AG04450 (cell line): ENCODE measurements at regions of chr11 and their contacts with region 1.

Region 1: DNA sequence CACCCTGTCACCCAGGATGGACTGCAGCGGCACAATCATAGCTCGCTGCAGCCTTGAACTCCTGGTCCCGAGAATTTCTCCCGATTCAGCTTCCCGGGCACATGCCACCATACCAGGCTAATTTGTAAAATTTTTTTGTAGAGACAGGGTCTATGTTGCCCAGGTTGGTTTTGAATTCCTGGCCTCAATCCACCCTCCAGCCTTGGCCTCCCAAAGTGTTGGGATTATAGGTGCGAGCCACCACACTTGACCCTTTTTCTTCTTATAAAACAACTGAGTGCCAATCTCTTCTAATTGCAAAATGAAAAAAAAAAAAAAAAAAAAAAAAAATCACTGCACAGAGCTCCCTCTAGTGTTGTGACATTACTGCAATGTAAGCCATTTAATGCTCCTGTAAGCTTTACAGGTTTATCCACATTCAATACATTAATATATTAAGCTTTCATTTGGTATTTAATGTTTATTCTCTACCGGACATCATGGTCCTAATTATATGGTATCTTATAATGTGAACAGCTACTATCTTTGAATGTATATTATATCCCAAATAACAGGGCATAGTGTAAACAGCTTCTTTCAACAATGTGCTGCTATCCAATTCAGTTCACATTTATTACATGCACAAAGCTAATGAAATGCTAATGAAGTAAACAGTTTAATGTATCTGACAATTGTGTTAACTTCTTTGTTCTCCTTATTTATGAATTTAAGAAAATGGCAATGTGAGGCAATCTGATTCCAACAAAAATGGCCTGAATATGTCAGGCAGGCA is 44.6 kb downstream of the COPB1 start:
- DNase-seq: no peak
- H3K4me3 ChIP-seq: no peak overlapping the region
- H3K27ac ChIP-seq: no peak overlapping the region
- H3K27me3 ChIP-seq: no peaks in the 10 kb centered on the region
- CTCF ChIP-seq: peak; percentile 70

Region 2: GRCh38 chr11:14242187-14242586 is 212.9 kb before region 1 on chr11:
- CTCF ChIA-PET with region 1: interaction called, 10 read pairs
- POLR2A ChIA-PET with region 1: no interaction called
- DNase-seq: no peak
- H3K4me3 ChIP-seq: no peak overlapping the region
- H3K27ac ChIP-seq: no peak overlapping the region
- H3K27me3 ChIP-seq: peaks cover 27% of the 10 kb centered on the region
- CTCF ChIP-seq: no peak

Region 3: GRCh38 chr11:14269692-14270573 is 185.1 kb before region 1 on chr11:
- CTCF ChIA-PET with region 1: interaction called, 11 read pairs
- POLR2A ChIA-PET with region 1: no interaction called
- DNase-seq: no peak
- H3K4me3 ChIP-seq: no peak overlapping the region
- H3K27ac ChIP-seq: no peak overlapping the region
- H3K27me3 ChIP-seq: no peaks in the 10 kb centered on the region
- CTCF ChIP-seq: no peak

Region 4: GRCh38 chr11:14300661-14301304 is 154.3 kb before region 1 on chr11:
- CTCF ChIA-PET with region 1: interaction called, 273 read pairs
- POLR2A ChIA-PET with region 1: interaction called, 4 read pairs
- DNase-seq: no peak
- H3K4me3 ChIP-seq: no peak overlapping the region
- H3K27ac ChIP-seq: no peak overlapping the region
- H3K27me3 ChIP-seq: no peaks in the 10 kb centered on the region
- CTCF ChIP-seq: peak; percentile 87

Region 5: GRCh38 chr11:14350716-14351238 is 104.3 kb before region 1 on chr11:
- CTCF ChIA-PET with region 1: interaction called, 17 read pairs
- POLR2A ChIA-PET with region 1: no interaction called
- DNase-seq: no peak
- H3K4me3 ChIP-seq: no peak overlapping the region
- H3K27ac ChIP-seq: no peak overlapping the region
- H3K27me3 ChIP-seq: no peaks in the 10 kb centered on the region
- CTCF ChIP-seq: no peak

Region 6: GRCh38 chr11:14388352-14388751 is 66.7 kb before region 1 on chr11:
- CTCF ChIA-PET with region 1: interaction called, 12 read pairs
- POLR2A ChIA-PET with region 1: interaction called, 8 read pairs
- DNase-seq: no peak
- H3K4me3 ChIP-seq: no peak overlapping the region
- H3K27ac ChIP-seq: no peak overlapping the region
- H3K27me3 ChIP-seq: no peaks in the 10 kb centered on the region
- CTCF ChIP-seq: no peak

Region 7: DNA sequence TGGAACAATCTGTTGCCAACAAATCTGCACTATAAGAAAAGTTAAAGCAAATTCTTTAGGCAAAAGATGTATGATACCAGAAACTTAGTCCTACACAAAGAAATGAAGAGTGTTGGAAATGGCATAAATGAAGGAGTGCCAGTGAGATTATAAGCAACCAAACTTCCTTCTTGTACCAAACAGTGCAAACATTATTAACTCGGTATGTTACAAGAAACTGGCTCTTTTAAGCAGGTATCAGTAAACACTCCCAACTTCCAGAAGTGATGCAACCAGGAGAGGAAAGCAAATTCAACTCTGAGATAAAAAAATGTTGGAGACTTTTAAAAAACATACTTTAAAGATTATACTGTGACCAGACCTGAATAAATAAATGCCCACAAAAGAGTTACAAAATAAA is 16.1 kb after region 1 on chr11:
- CTCF ChIA-PET with region 1: interaction called, 53 read pairs
- POLR2A ChIA-PET with region 1: interaction called, 4 read pairs
- DNase-seq: no peak
- H3K4me3 ChIP-seq: no peak overlapping the region
- H3K27ac ChIP-seq: no peak overlapping the region
- H3K27me3 ChIP-seq: no peaks in the 10 kb centered on the region
- CTCF ChIP-seq: no peak